Endothelial cell of umbilical vein (primary cell): ENCODE measurements at regions of chr5 and their contacts with region 1.

Region 1: DNA sequence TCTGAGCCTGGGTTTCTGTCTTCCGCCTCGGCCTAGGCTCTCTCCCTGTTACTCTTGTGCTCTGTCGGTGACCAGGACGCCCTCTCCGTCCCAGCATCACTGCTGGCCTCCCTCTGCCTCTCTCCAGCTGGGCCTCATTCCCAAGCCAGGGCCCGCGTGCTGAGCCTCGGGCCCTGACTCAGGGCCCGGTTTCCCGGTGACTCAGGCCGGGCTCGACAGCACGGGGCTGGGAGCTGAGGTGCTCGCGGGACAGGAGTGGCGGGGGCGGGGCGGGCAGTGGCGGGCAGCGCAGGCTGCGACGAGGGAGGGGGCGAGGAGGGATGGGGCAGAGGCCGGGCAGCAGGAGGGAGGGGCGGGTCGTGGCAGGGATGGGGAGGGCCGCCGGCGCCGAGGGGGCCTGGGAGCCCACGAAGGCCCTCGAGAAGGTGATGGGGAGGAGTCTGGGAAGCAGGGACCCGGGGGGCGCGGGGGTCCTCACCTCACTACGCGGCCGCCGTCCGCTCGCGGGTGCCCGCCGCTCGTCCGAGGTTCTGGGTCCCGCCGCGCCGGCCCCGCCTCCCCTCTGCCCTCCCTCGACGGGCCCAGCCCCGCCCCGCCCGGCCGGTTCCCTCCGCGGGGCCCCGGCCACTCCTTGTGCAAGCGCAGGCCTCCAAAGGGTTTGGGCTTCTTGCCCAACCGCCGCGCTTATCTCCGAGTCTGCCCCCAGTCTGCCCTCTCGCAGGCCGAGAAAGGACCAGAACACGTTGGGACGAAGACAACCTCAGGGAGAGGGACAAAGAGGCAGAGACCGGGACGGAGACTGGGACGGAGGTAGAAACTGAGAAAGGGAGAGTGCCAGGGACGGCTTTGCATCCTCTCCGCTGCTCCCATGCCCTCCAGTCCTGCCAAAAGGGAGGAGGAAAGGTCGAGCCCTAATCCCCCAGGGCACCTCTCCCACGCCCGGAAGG is at the start of gene ARAP3:
- DNase-seq: peak; percentile 92
- H3K4me3 ChIP-seq: peak within 1 kb of the TSS; percentile 5 to 69 (median 45)
- H3K27ac ChIP-seq: peak within 1 kb of the TSS; percentile 100
- H3K4me1 ChIP-seq: peaks cover 62% of the 10 kb centered on the region
- H3K27me3 ChIP-seq: no peaks in the 10 kb centered on the region
- CTCF ChIP-seq: no peak
- POLR2A ChIP-seq: peak; percentile 56
- total RNA-seq, gene ARAP3: 136 and 142 TPM in 2 replicates

Region 2: GRCh38 chr5:141664732-141665461 is 17.1 kb before region 1 on chr5:
- CTCF ChIA-PET with region 1: interaction called, 14 read pairs
- POLR2A ChIA-PET with region 1: no interaction called
- dilution Hi-C with region 1: no loop called
- intact Hi-C with region 1: loop called (anchors 1 kb)
- DNase-seq: peak; percentile 73
- H3K4me3 ChIP-seq: no peak overlapping the region
- H3K27ac ChIP-seq: no peak overlapping the region
- H3K4me1 ChIP-seq: peaks cover 4% of the 10 kb centered on the region
- H3K27me3 ChIP-seq: no peaks in the 10 kb centered on the region
- CTCF ChIP-seq: peak; percentile 85 to 90
- POLR2A ChIP-seq: no peak

Region 3: GRCh38 chr5:141816598-141817372 is 134.8 kb after region 1 on chr5:
- CTCF ChIA-PET with region 1: no interaction called
- POLR2A ChIA-PET with region 1: no interaction called
- dilution Hi-C with region 1: no loop called
- intact Hi-C with region 1: loop called (anchors 2 kb)
- DNase-seq: peak; percentile 81
- H3K4me3 ChIP-seq: no peak overlapping the region
- H3K27ac ChIP-seq: peak overlapping the region; percentile 74
- H3K4me1 ChIP-seq: peaks cover 24% of the 10 kb centered on the region
- H3K27me3 ChIP-seq: no peaks in the 10 kb centered on the region
- CTCF ChIP-seq: no peak
- POLR2A ChIP-seq: no peak

Region 4: GRCh38 chr5:141835928-141836670 is 154.1 kb after region 1 on chr5:
- CTCF ChIA-PET with region 1: interaction called, 3 read pairs
- POLR2A ChIA-PET with region 1: no interaction called
- dilution Hi-C with region 1: no loop called
- intact Hi-C with region 1: loop called (anchors 2 kb)
- DNase-seq: peak; percentile 87
- H3K4me3 ChIP-seq: no peak overlapping the region
- H3K27ac ChIP-seq: peak overlapping the region; percentile 78
- H3K4me1 ChIP-seq: peaks cover 66% of the 10 kb centered on the region
- H3K27me3 ChIP-seq: no peaks in the 10 kb centered on the region
- CTCF ChIP-seq: no peak
- POLR2A ChIP-seq: no peak